ENCODE measurements at regions of chr20 and their contacts with region 1.

Region 1: DNA sequence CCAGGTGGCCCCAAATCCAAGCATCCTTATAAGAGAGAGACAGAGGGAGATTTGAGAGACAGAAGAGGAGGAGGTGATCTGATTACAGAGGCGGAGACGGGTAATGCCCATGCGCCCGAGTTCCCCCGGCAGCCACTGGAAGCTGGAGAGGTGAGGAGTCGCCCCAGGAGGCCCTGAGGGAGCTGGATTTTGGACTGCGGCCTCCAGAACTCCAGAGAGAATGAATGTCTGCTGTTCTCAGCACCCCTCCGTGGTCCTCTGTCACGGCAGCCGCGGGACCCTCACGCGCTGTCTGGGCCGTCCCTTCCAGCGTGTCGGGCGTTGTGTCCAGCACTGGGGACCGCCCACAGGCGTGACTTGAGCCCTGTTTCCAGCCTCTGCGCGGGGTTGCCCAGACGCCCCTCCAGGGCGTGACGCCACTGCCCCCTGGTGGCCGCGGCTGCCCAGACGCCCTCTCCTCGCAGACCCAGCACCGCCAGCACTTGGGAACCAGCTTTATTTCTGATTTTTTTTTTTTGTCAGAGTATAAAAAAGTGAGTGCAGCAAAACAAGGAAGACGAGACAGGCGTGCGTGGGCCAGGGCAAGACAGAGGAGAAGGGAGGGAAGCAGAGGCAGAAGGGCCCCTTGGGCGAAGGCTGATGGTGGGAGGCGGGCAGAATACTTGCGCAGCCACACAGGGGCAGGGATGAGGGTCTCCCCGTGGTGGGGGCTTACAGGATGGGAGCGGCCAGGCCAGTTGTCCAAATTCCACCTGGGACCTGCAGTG is 4.1 kb upstream of the ZNF512B start:
- DNase-seq: peak; percentile 89
- ATAC-seq: peak; percentile 34
- H3K4me3 Mint-ChIP-seq: no peak overlapping the region
- H3K27ac Mint-ChIP-seq: no peak overlapping the region
- H3K4me1 Mint-ChIP-seq: peaks cover 41% of the 10 kb centered on the region
- H3K27me3 Mint-ChIP-seq: no peaks in the 10 kb centered on the region

Region 2: GRCh38 chr20:63216041-63216848 is 757.6 kb before region 1 on chr20 and contains the start of gene YTHDF1:
- CTCF ChIA-PET with region 1: no interaction called
- POLR2A ChIA-PET with region 1: no interaction called
- intact Hi-C with region 1: loop called in 1 of 2 experiments (anchors 10 kb)
- DNase-seq: peak; percentile 98
- ATAC-seq: peak; percentile 98
- H3K4me3 Mint-ChIP-seq: peak within 1 kb of the TSS; percentile 92
- H3K27ac Mint-ChIP-seq: peak within 1 kb of the TSS; percentile 88
- H3K4me1 Mint-ChIP-seq: peaks cover 43% of the 10 kb centered on the region
- H3K27me3 Mint-ChIP-seq: peaks cover 4% of the 10 kb centered on the region
- total RNA-seq, gene YTHDF1: 32.2 to 32.6 TPM

Region 3: GRCh38 chr20:63775096-63775978 is 198.5 kb before region 1 on chr20:
- CTCF ChIA-PET with region 1: interaction called, 4 read pairs
- POLR2A ChIA-PET with region 1: no interaction called
- intact Hi-C with region 1: loop called in 1 of 2 experiments (anchors 1 kb)
- DNase-seq: peak; percentile 69
- ATAC-seq: peak; percentile 57
- H3K4me3 Mint-ChIP-seq: peak overlapping the region; percentile 28
- H3K27ac Mint-ChIP-seq: no peak overlapping the region
- H3K4me1 Mint-ChIP-seq: peaks cover 8% of the 10 kb centered on the region
- H3K27me3 Mint-ChIP-seq: no peaks in the 10 kb centered on the region

Region 4: GRCh38 chr20:63782051-63782471 is 191.8 kb before region 1 on chr20:
- CTCF ChIA-PET with region 1: interaction called, 4 read pairs
- POLR2A ChIA-PET with region 1: no interaction called
- intact Hi-C with region 1: loop called (anchors 1 to 5 kb)
- DNase-seq: peak; percentile 84
- ATAC-seq: peak; percentile 94
- H3K4me3 Mint-ChIP-seq: no peak overlapping the region
- H3K27ac Mint-ChIP-seq: peak overlapping the region; percentile 28
- H3K4me1 Mint-ChIP-seq: peaks cover 19% of the 10 kb centered on the region
- H3K27me3 Mint-ChIP-seq: no peaks in the 10 kb centered on the region

Region 5: GRCh38 chr20:63911176-63911575 is 62.6 kb before region 1 on chr20:
- CTCF ChIA-PET with region 1: interaction called, 7 read pairs
- POLR2A ChIA-PET with region 1: no interaction called
- intact Hi-C with region 1: loop called (anchors 1 to 2 kb)
- DNase-seq: no peak
- ATAC-seq: no peak
- H3K4me3 Mint-ChIP-seq: no peak overlapping the region
- H3K27ac Mint-ChIP-seq: no peak overlapping the region
- H3K4me1 Mint-ChIP-seq: peaks cover 31% of the 10 kb centered on the region
- H3K27me3 Mint-ChIP-seq: no peaks in the 10 kb centered on the region

Measured in activated CD4-positive, alpha-beta T cell treated with anti-CD3 and anti-CD28 coated beads for 36 hours (primary cell).